Heart right ventricle (tissue), 16 donors: ENCODE measurements at regions of chr17 and their contacts with region 1.

Region 1: DNA sequence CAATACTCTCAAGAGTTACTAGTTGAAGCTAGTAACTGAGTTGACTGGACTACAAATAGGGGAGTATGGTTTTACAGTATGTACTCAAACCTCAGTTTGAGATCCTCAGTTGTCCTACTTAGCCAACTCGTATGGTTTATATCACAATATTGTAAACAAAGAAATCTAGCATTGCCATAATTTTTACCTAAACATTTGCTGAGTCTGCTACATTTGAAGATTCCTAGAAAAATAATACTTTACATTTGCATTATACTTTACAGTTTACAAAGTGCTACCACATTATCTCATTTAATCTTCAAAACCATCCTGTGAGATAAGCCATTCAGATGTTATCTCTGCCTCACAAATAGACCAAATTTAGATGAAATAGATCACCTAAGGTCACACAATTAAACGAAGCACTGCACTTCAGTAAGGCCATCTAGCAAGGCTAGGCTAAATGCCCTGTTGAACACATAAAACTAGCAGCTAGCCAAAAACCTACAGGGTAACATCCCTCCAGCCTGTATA is 16.3 kb downstream of the CBX1 start:
- DNase-seq: no peak
- ATAC-seq: no peak
- H3K4me3 ChIP-seq: no peak overlapping the region
- H3K27ac ChIP-seq: no peak overlapping the region
- H3K4me1 ChIP-seq: peaks cover 0 to 22% (median 13%) of the 10 kb centered on the region in 9 donors
- H3K27me3 ChIP-seq: no peaks in the 10 kb centered on the region
- CTCF ChIP-seq: no peak

Region 2: DNA sequence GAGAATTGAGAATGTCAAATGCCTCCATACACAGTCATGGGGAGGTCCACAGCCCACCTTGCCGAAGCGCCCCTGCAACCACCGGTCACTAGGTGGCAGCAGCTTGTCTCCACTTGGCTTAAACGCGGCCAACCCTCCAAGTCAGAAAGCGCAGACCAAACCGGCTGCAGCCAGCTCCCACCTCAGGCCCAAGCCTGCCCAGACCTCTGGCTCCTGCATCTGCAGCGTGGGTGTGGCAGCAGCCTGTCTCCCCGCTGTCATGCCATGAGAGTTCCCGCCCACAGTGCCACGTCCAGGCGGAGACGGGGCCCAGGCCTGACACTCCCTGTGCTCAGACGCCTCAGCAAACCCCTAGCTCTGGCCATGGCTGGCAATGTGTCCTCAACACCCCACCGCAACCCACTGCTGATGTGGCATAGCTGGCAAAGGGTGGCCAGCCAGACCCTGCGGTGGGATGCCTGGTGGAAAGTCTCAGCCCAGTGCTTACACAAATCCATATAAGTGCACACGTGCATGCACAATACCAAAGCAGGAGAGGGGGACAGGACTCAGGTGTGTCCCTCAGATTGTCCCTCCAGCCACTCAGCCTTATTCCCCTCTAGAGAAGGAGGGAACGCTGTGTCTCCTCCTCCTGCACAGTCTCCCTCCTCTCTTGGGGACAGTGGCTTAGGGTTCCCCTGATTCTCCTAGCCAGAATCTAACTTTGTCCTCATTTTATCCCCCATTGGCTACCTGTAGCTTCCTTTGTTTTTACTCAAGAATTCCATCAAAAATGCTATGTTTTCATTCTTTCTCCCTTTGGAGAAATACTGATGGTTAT is 58.3 kb before region 1 on chr17:
- intact Hi-C with region 1: no loop called
- DNase-seq: peak; percentile 83 to 88
- ATAC-seq: peak; percentile 36 to 69 (median 59)
- H3K4me3 ChIP-seq: no peak overlapping the region
- H3K27ac ChIP-seq: peak overlapping the region in 2 of 10 donors; percentile 6 to 86
- H3K4me1 ChIP-seq: peaks cover 18 to 61% (median 46%) of the 10 kb centered on the region in 9 donors
- H3K27me3 ChIP-seq: peaks cover 0 to 20% (median 13%) of the 10 kb centered on the region in 7 donors
- CTCF ChIP-seq: peak; percentile 70 to 92 (median 86)

Region 3: GRCh38 chr17:48123111-48123510 is 38.1 kb after region 1 on chr17:
- intact Hi-C with region 1: loop called in 2 of 10 experiments (anchors 5 kb)
- DNase-seq: no peak
- ATAC-seq: no peak
- H3K4me3 ChIP-seq: no peak overlapping the region
- H3K27ac ChIP-seq: no peak overlapping the region
- H3K4me1 ChIP-seq: peaks cover 0 to 6% (median 0%) of the 10 kb centered on the region in 9 donors
- H3K27me3 ChIP-seq: no peaks in the 10 kb centered on the region
- CTCF ChIP-seq: no peak